ENCODE measurements at regions of chr7 and their contacts with region 1.

Region 1: DNA sequence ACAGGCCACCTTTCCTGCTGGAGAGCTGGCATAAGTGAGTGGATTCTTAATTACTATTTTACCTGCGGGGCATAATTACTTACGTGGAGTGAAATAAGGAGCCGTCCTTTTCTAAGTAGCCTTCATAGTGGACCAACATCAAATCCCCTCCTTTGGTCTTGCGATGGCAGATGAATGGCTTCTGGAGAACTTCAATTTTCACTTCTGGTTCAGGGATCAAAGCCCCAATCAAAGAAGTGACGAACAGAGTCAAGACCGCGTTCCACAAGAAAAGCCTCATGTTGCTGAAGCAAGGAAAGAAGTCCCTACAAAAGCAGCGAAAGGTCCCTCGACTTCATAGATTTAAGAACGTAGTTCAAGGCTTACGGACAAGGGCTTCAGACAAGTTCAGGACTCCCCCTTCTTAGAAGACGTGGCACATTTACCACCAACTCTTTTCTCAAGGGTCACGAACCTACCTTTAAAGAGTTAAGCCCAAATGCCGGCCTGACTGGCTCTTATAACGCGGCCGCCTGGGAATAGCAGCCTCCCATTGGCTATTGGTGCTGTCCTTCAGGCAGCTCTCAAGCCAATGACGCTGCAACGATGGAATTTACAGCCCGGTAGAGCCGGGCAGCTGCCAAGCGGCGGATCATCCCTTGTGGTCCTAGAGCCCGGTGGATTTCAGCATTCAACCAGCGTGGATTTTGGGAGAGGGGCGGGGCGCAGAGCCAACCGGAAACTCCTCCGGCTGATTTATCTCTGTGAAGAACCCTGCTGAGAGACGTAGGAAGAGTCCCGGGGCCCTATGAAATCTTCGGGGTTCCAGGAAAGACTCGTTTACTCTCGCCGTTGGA is at the start of gene FKBP14:
- DNase-seq: peak; percentile 76 to 97 (median 88)
- ATAC-seq: peak; percentile 82
- H3K4me3 ChIP-seq: peak within 1 kb of the TSS; percentile 70
- H3K4me3 Mint-ChIP-seq: peak within 1 kb of the TSS; percentile 90
- H3K27ac ChIP-seq: peak within 1 kb of the TSS; percentile 36 to 50
- H3K27ac Mint-ChIP-seq: peak within 1 kb of the TSS; percentile 80
- H3K4me1 ChIP-seq: peaks cover 14% of the 10 kb centered on the region
- H3K4me1 Mint-ChIP-seq: peaks cover 42% of the 10 kb centered on the region
- H3K27me3 ChIP-seq: no peaks in the 10 kb centered on the region
- H3K27me3 Mint-ChIP-seq: no peaks in the 10 kb centered on the region
- CTCF ChIP-seq: no peak
- total RNA-seq, gene FKBP14: 4.3 to 5.2 TPM

Region 2: GRCh38 chr7:30038182-30038980 is 11.9 kb after region 1 on chr7:
- CTCF ChIA-PET with region 1: no interaction called
- POLR2A ChIA-PET with region 1: interaction called, 21 read pairs
- intact Hi-C with region 1: no loop called
- DNase-seq: no peak
- ATAC-seq: no peak
- H3K4me3 ChIP-seq: no peak overlapping the region
- H3K4me3 Mint-ChIP-seq: no peak overlapping the region
- H3K27ac ChIP-seq: no peak overlapping the region
- H3K27ac Mint-ChIP-seq: no peak overlapping the region
- H3K4me1 ChIP-seq: no peaks in the 10 kb centered on the region
- H3K4me1 Mint-ChIP-seq: peaks cover 43% of the 10 kb centered on the region
- H3K27me3 ChIP-seq: no peaks in the 10 kb centered on the region
- H3K27me3 Mint-ChIP-seq: no peaks in the 10 kb centered on the region
- CTCF ChIP-seq: no peak

Region 3: DNA sequence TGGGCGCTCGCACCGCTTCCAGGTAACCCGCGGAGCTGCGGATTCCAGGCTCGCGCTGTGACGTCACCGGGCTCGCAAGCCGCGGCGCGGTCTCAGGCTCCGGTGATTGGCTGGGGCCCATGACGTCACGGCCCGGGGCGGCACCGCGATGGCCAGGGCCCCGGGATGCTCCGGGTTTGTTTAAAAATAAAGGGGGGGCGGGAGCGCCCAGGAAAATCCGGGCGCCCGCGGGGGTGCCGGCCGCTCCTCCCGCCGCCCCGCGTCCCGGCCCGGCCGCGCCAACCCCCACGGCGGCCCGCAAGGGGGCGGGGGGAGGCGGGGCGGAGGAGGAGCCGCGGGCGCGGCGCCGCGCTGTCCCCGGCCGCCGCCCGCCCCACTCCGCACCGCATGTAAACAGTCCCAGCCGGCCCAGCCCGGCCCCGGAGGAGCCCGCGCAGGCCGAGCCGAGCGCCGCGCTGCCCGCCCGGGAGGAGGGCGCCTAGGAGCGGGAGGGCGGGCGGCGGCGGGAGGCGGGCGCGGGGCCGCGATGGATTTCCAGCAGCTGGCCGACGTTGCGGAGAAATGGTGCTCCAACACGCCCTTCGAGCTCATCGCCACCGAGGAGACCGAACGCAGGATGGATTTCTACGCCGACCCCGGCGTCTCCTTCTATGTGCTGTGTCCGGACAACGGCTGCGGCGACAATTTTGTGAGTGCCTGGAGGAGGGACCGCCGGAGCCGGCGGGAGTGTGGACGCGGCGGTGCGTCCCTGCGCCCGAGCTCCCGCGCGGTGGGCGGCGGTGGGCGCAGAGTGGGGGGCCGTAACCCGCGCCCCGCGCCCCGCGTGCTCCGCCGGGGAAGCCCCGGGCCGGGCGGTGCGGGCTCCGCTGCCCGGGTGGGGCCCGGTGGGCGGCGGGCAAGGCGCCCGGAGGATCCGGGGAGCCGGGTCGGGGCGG is 108.4 kb after region 1 on chr7 and contains the start of gene MTURN:
- CTCF ChIA-PET with region 1: no interaction called
- POLR2A ChIA-PET with region 1: interaction called, 3 read pairs
- intact Hi-C with region 1: loop called (anchors 2 to 10 kb)
- DNase-seq: peak; percentile 64 to 96 (median 83)
- ATAC-seq: peak; percentile 76
- H3K4me3 ChIP-seq: peak within 1 kb of the TSS; percentile 94
- H3K4me3 Mint-ChIP-seq: peak within 1 kb of the TSS; percentile 94
- H3K27ac ChIP-seq: no peak within 1 kb of the TSS
- H3K27ac Mint-ChIP-seq: peak within 1 kb of the TSS; percentile 89
- H3K4me1 ChIP-seq: peaks cover 20% of the 10 kb centered on the region
- H3K4me1 Mint-ChIP-seq: peaks cover 20% of the 10 kb centered on the region
- H3K27me3 ChIP-seq: no peaks in the 10 kb centered on the region
- H3K27me3 Mint-ChIP-seq: peaks cover 6% of the 10 kb centered on the region
- CTCF ChIP-seq: no peak
- total RNA-seq, gene MTURN: 38.4 to 38.9 TPM

Region 4: GRCh38 chr7:30504347-30505173 is 478.1 kb after region 1 on chr7 and contains the start of gene GGCT:
- CTCF ChIA-PET with region 1: no interaction called
- POLR2A ChIA-PET with region 1: no interaction called
- intact Hi-C with region 1: loop called in 1 of 2 experiments (anchors 5 kb)
- DNase-seq: peak; percentile 93 to 98 (median 95)
- ATAC-seq: peak; percentile 98
- H3K4me3 ChIP-seq: peak within 1 kb of the TSS; percentile 88
- H3K4me3 Mint-ChIP-seq: peak within 1 kb of the TSS; percentile 94
- H3K27ac ChIP-seq: peak within 1 kb of the TSS; percentile 42 to 57
- H3K27ac Mint-ChIP-seq: peak within 1 kb of the TSS; percentile 74
- H3K4me1 ChIP-seq: peaks cover 19% of the 10 kb centered on the region
- H3K4me1 Mint-ChIP-seq: peaks cover 29% of the 10 kb centered on the region
- H3K27me3 ChIP-seq: no peaks in the 10 kb centered on the region
- H3K27me3 Mint-ChIP-seq: no peaks in the 10 kb centered on the region
- CTCF ChIP-seq: no peak
- total RNA-seq, gene GGCT: 6.3 to 6.6 TPM

Region 5: DNA sequence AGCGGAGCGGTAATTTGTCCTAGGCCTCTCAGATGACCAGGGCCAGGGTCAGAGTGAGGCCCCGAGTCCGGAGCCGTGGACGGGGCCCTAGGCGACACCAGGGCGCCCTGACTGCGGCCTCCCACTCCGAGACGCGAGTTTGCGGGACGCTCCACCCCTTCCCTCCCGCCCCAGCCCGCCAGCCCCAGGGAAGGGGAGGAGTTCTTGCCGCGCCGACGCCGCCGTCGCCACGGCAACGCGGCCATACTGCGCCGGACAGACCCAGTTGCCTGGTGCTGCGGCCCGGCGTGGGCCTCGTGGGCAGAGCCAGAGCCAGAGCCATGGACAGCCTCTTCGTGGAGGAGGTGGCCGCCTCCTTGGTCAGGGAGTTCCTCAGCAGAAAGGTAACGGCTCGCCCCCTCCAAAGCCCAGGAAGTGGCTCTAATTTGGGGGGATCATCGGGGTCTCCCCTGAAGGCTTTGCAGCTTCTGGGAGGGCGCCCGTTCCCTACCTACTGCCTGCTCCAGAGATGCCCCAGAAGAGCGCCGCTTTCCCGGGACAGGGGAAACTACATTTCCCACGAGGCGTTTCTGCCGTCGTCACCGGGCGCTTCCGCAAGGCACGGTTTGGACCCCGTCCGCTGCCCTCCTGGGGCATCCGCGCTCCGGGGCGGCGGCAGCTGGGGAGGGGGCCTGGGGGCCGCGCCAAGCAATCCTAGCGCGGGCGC is 744.9 kb after region 1 on chr7 and contains the start of gene MINDY4:
- CTCF ChIA-PET with region 1: no interaction called
- POLR2A ChIA-PET with region 1: no interaction called
- intact Hi-C with region 1: loop called in 1 of 2 experiments (anchors 10 kb)
- DNase-seq: peak; percentile 30 to 85 (median 58)
- ATAC-seq: peak; percentile 92
- H3K4me3 ChIP-seq: peak within 1 kb of the TSS; percentile 90
- H3K4me3 Mint-ChIP-seq: peak within 1 kb of the TSS; percentile 90
- H3K27ac ChIP-seq: peak within 1 kb of the TSS; percentile 33 to 48
- H3K27ac Mint-ChIP-seq: peak within 1 kb of the TSS; percentile 53
- H3K4me1 ChIP-seq: peaks cover 10% of the 10 kb centered on the region
- H3K4me1 Mint-ChIP-seq: peaks cover 12% of the 10 kb centered on the region
- H3K27me3 ChIP-seq: no peaks in the 10 kb centered on the region
- H3K27me3 Mint-ChIP-seq: no peaks in the 10 kb centered on the region
- CTCF ChIP-seq: no peak
- total RNA-seq, gene MINDY4: 0.36 to 0.60 TPM